ENCODE measurements at regions of chr19 and their contacts with region 1.

Region 1: GRCh38 chr19:3557461-3558248 is at the start of gene MFSD12:
- DNase-seq: peak; percentile 94
- H3K4me3 Mint-ChIP-seq: peak within 1 kb of the TSS; percentile 96
- H3K27ac Mint-ChIP-seq: peak within 1 kb of the TSS; percentile 81
- H3K4me1 Mint-ChIP-seq: peaks cover 37% of the 10 kb centered on the region
- H3K27me3 Mint-ChIP-seq: no peaks in the 10 kb centered on the region
- total RNA-seq, gene MFSD12: 31.3 to 34.0 TPM

Region 2: GRCh38 chr19:3505598-3506383 is 51.9 kb before region 1 on chr19 and contains the start of gene FZR1:
- CTCF ChIA-PET with region 1: interaction called, 4 read pairs
- intact Hi-C with region 1: loop called (anchors 2 kb)
- DNase-seq: peak; percentile 99
- H3K4me3 Mint-ChIP-seq: peak within 1 kb of the TSS; percentile 90
- H3K27ac Mint-ChIP-seq: peak within 1 kb of the TSS; percentile 92
- H3K4me1 Mint-ChIP-seq: peaks cover 39% of the 10 kb centered on the region
- H3K27me3 Mint-ChIP-seq: no peaks in the 10 kb centered on the region
- total RNA-seq, gene FZR1: 40.3 to 46.3 TPM

Region 3: GRCh38 chr19:3520166-3521103 is 37.2 kb before region 1 on chr19:
- CTCF ChIA-PET with region 1: no interaction called
- intact Hi-C with region 1: no loop called
- DNase-seq: no peak
- H3K4me3 Mint-ChIP-seq: no peak overlapping the region
- H3K27ac Mint-ChIP-seq: no peak overlapping the region
- H3K4me1 Mint-ChIP-seq: peaks cover 30% of the 10 kb centered on the region
- H3K27me3 Mint-ChIP-seq: no peaks in the 10 kb centered on the region

Region 4: DNA sequence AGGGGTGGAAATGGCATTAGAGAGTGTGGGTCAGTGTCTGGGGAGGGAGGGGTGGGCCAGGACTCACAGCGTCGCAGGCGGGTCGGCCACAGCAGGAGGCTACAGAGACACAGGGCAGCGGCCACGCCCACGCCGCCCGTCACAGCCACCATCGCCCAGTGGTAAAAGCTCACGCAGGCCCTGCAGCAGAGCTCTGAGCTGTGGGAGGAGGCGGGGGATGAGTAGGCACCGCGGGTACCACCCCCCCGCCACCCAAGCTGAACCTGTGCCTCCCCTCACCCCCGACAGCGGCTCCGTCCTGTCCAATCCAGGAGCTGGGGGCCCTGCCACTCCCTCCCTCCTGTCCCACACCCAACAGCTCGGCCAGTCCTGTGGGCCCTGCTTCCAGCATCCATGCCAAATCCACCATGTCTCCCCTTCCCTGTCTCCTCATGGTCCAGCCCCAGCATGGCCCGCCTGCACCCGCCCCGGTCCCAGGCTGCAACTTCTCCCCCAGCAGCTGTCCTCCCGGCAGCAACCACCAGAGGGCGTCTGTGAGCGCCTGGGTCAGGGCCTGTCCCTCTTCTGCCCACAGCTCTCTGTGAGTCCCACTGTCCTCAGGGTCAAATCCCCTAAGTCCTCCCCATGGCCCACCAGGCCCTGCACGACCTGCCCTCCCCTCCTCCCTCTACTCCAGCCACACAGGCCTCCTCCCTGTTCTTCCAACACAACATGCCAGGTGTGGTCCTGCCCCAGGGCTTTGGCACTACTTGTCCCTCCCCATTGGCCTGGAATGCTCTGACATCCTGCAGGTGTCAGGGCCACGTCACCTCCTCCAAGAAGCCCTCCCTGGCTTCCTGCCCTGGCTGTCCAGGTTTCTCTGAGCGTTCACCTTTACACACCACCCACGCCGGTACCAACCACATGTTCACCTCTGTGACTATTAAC is 12.7 kb before region 1 on chr19:
- CTCF ChIA-PET with region 1: interaction called, 32 read pairs
- intact Hi-C with region 1: no loop called
- DNase-seq: peak; percentile 88
- H3K4me3 Mint-ChIP-seq: no peak overlapping the region
- H3K27ac Mint-ChIP-seq: peak overlapping the region; percentile 62
- H3K4me1 Mint-ChIP-seq: peaks cover 10% of the 10 kb centered on the region
- H3K27me3 Mint-ChIP-seq: no peaks in the 10 kb centered on the region

Region 5: DNA sequence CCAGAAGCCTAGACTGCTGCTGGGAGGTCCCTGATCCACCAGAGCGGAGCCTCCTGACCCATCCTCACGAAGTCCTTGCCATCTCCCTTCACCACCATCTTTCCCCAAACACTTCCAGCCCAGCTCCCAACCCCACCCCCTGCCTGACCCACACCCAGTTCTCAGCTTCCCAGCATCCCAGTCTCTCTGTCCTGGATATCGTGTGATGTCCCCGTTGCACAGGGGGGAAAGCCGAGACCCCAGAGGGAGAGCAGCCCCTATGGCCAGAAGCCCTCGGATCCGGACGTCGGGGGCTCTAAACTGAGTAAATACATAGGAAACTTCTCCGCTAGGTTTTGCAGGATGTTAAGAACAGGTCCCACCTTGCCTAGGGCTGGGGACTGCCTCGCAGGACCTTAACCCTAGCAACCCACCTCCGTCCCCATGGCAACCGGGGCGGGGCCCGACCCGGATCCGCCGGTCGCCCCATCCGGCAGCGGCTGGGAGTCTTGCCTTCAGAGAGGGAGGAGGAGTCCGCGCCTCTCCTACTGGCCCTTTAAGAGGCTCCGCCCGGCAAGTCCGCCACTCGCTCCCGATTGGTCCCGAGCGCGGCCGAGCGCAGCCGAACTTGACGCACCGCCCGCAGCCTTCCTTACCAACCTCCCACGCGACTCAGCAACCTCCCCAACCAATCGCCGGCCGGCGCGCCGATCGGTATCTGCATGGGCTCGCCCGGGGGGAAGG is 14.6 kb after region 1 on chr19:
- CTCF ChIA-PET with region 1: no interaction called
- intact Hi-C with region 1: loop called (anchors 1 kb)
- DNase-seq: peak; percentile 100
- H3K4me3 Mint-ChIP-seq: peak overlapping the region; percentile 75
- H3K27ac Mint-ChIP-seq: peak overlapping the region; percentile 56
- H3K4me1 Mint-ChIP-seq: peaks cover 14% of the 10 kb centered on the region
- H3K27me3 Mint-ChIP-seq: no peaks in the 10 kb centered on the region

Region 6: DNA sequence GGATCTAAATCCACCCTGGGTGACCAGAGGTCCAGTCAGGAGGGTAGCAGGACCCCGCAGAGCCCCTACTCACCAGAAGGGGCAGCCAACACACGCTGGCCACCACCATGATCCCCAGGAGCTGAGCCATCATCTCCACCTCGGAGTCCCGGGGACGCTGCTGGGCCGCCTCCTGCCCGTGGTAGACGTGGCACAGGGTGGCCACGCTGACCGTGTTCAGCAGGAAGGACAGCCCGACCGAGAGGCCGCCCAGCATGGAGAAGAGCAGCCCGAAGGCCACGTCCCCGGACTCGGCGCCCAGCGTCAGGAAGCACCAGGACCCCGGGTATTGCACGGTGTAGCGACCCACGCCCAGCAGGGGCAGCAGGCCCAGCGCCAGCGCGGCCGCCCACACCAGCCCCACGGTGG is 42.1 kb after region 1 on chr19:
- CTCF ChIA-PET with region 1: no interaction called
- intact Hi-C with region 1: no loop called
- DNase-seq: no peak
- H3K4me3 Mint-ChIP-seq: no peak overlapping the region
- H3K27ac Mint-ChIP-seq: no peak overlapping the region
- H3K4me1 Mint-ChIP-seq: no peaks in the 10 kb centered on the region
- H3K27me3 Mint-ChIP-seq: no peaks in the 10 kb centered on the region

Region 7: GRCh38 chr19:3626473-3627350 is 69.1 kb after region 1 on chr19 and contains the start of gene CACTIN:
- CTCF ChIA-PET with region 1: interaction called, 3 read pairs
- intact Hi-C with region 1: loop called (anchors 1 kb)
- DNase-seq: peak; percentile 99
- H3K4me3 Mint-ChIP-seq: peak within 1 kb of the TSS; percentile 79
- H3K27ac Mint-ChIP-seq: peak within 1 kb of the TSS; percentile 98
- H3K4me1 Mint-ChIP-seq: peaks cover 29% of the 10 kb centered on the region
- H3K27me3 Mint-ChIP-seq: no peaks in the 10 kb centered on the region
- total RNA-seq, gene CACTIN: 24.6 to 27.0 TPM

Region 8: DNA sequence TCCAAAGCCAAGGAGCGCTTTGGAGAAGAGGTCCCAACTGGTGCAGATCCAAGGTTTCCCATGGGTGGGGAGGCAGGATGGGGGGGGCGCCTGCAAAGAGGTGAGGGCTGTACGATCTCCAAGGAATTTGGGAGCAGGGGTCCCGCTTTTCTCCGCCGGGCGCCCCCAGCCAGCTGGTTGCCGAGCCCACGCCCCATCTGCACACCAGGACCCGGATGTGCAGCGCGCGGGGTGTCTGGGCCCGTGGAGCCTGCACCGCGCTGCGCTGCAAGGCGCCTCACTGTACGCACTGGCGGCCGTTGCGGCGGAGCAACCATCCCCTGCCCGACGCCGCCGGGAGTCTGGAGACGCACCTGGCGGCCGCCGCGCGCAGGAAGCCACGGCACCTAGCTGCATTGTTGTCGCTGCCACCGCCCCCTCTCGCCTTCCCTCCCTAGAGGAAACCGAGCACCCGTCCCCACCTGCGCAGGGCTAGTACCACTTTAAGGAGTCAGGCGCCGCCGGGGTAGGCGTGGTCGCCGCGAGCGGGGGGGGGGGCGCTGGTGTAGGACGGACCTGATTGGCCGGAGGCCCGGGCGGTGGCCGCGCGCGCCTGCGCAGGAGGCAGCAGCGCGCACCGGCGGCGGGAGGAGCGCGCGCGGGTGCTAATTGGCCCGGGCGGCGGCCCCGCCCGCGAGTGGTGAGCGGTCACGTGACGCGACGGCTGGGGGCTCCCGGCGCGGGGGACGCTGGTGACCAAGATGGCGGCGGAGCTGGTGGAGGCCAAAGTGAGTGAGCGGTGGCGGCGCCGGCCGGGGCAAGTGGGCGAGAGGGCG is 449.6 kb after region 1 on chr19 and contains the start of gene PIAS4:
- CTCF ChIA-PET with region 1: no interaction called
- intact Hi-C with region 1: loop called (anchors 1 kb)
- DNase-seq: peak; percentile 96
- H3K4me3 Mint-ChIP-seq: peak within 1 kb of the TSS; percentile 84
- H3K27ac Mint-ChIP-seq: peak within 1 kb of the TSS; percentile 79
- H3K4me1 Mint-ChIP-seq: peaks cover 31% of the 10 kb centered on the region
- H3K27me3 Mint-ChIP-seq: no peaks in the 10 kb centered on the region
- total RNA-seq, gene PIAS4: 16.1 to 20.1 TPM